ENCODE measurements at regions of chr6 and their contacts with region 1.

Region 1: DNA sequence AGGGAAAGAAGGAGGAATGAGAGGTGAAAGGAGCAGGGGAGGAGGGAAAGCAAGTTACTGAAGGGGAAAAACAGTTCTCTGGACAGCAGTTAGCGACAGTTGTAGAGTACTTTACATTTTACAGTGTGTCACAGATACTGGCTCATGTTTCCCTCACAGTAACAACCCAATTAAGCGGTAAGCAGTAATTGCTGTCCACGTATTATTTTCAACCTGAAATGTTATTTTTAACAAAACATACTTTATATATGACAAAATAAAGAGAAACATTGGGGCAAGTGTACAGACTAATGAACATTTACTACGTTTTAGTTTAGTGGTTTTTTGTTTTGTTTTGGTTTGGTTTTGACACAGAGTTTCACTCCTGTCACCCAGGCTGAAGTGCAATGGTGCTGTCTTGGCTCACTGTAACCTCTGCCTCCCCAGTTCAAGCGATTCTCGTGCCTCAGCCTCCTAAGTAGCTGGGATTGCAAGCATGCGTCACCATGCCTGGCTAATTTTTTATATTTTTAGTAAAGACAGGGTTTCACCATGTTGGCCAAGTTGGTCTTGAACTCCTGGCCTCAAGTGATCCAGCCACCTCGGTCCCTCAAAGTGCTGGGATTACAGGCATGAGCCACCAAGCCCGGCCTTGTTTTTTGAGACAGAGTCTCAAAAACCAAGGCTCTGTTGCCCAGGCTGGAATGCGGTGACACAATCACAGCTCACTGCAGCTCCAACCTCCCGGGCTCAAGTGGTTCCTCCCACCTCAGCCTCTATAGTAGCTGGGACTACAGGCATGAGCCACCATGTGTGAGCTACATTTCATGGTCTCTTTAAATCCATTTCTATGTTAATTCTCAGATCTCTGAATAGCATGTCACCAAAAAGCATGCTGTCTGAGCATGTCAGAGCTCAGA is 22.6 kb upstream of the BTN3A2 start:
- DNase-seq: peak; percentile 53
- H3K4me3 ChIP-seq: peak overlapping the region; percentile 51
- H3K27ac ChIP-seq: peak overlapping the region; percentile 58
- H3K4me1 ChIP-seq: peaks cover 89% of the 10 kb centered on the region
- CTCF ChIP-seq: no peak

Region 2: GRCh38 chr6:26175428-26176181 is 166.8 kb before region 1 on chr6:
- CTCF ChIA-PET with region 1: no interaction called
- POLR2A ChIA-PET with region 1: no interaction called
- intact Hi-C with region 1: loop called (anchors 1 kb)
- DNase-seq: peak; percentile 79
- H3K4me3 ChIP-seq: peak overlapping the region; percentile 74
- H3K27ac ChIP-seq: peak overlapping the region; percentile 94
- H3K4me1 ChIP-seq: peaks cover 30% of the 10 kb centered on the region
- CTCF ChIP-seq: peak; percentile 95

Region 3: GRCh38 chr6:26327450-26328264 is 14.7 kb before region 1 on chr6:
- CTCF ChIA-PET with region 1: interaction called, 5 read pairs
- POLR2A ChIA-PET with region 1: interaction called, 20 read pairs
- intact Hi-C with region 1: no loop called
- DNase-seq: peak; percentile 68
- H3K4me3 ChIP-seq: peak overlapping the region; percentile 66
- H3K27ac ChIP-seq: no peak overlapping the region
- H3K4me1 ChIP-seq: peaks cover 44% of the 10 kb centered on the region
- CTCF ChIP-seq: no peak

Region 4: GRCh38 chr6:26420688-26421171 is 78.4 kb after region 1 on chr6:
- CTCF ChIA-PET with region 1: no interaction called
- POLR2A ChIA-PET with region 1: no interaction called
- intact Hi-C with region 1: loop called (anchors 1 kb)
- DNase-seq: peak; percentile 62
- H3K4me3 ChIP-seq: peak overlapping the region; percentile 76
- H3K27ac ChIP-seq: peak overlapping the region; percentile 9
- H3K4me1 ChIP-seq: peaks cover 31% of the 10 kb centered on the region
- CTCF ChIP-seq: peak; percentile 80

Region 5: DNA sequence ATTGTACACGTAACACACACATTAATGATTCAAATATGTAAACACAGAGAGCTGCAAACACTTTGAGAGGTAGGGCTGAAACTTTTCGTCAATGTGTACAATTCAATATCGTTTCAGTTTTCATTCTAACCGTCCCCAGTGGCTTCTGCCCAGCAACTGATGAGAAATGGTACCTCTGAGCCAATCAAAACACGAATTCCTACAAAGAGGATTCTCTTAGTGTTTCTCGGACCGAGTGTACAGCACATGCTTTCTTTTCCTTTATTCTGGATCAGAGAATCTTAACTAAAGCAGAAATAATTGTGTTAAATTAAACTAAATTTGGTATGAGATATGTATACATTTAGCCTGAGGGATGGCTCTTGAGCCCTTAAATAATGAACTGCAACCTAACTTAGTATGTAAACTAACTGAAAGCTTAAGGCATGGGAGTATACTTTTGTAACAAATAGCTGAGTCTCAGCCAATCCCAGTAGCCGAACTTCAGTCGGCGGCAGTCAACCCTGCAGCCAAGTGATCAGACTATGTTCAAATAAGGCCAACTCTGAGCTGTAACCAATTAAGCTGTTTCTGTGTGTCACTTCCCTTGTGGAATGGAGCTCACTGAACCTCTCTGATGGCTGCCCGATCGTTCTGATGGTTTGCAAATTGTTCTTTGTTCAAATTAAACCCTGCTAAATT is 131.5 kb after region 1 on chr6:
- CTCF ChIA-PET with region 1: interaction called, 5 read pairs
- POLR2A ChIA-PET with region 1: interaction called, 3 read pairs
- intact Hi-C with region 1: loop called (anchors 1 kb)
- DNase-seq: peak; percentile 95
- H3K4me3 ChIP-seq: peak overlapping the region; percentile 73
- H3K27ac ChIP-seq: peak overlapping the region; percentile 96
- H3K4me1 ChIP-seq: peaks cover 55% of the 10 kb centered on the region
- CTCF ChIP-seq: no peak

Region 6: GRCh38 chr6:26493258-26493657 is 150.9 kb after region 1 on chr6:
- CTCF ChIA-PET with region 1: no interaction called
- POLR2A ChIA-PET with region 1: interaction called, 5 read pairs
- intact Hi-C with region 1: loop called (anchors 1 kb)
- DNase-seq: peak; percentile 71
- H3K4me3 ChIP-seq: no peak overlapping the region
- H3K27ac ChIP-seq: no peak overlapping the region
- H3K4me1 ChIP-seq: peaks cover 39% of the 10 kb centered on the region
- CTCF ChIP-seq: peak; percentile 74

Region 7: DNA sequence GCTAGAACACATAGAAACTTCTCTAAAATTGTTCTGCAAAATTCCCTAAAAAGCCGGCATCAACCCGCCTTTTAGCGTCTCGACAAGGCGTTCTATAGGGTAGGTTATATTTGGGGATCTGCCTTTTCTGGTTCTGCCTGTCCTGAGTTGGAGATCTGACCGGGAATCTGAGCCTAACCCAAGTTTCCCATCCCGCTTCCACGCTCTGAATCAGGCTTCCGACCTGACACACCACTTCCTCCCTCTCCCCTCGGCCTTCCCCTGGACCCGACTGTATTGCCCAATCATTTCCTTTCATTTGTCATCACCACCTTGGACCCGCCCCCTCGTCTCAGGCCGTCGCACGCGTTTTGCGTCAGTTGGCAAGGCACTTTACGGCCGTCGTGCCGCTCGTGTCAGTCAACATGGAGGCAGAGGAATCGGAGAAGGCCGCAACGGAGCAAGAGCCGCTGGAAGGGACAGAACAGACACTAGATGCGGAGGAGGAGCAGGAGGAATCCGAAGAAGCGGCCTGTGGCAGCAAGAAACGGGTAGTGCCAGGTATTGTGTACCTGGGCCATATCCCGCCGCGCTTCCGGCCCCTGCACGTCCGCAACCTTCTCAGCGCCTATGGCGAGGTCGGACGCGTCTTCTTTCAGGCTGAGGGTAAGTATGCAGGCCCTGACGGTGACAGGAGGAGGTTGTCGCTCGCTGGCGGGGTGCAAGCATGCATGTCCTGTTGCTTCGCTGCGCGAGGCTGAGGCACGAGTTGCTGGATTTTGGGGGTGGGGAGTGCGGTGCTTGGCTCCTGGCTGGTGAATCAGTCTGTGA is 254.4 kb after region 1 on chr6 and contains the start of gene ABT1:
- CTCF ChIA-PET with region 1: interaction called, 7 read pairs
- POLR2A ChIA-PET with region 1: interaction called, 4 read pairs
- intact Hi-C with region 1: loop called (anchors 1 kb)
- DNase-seq: peak; percentile 97
- H3K4me3 ChIP-seq: peak within 1 kb of the TSS; percentile 91
- H3K27ac ChIP-seq: peak within 1 kb of the TSS; percentile 60
- H3K4me1 ChIP-seq: peaks cover 30% of the 10 kb centered on the region
- CTCF ChIP-seq: no peak
- total RNA-seq, gene ABT1: 32.2 and 34.6 TPM in 2 replicates